ENCODE measurements at regions of chrX and their contacts with region 1.

Region 1: GRCh38 chrX:107514944-107515343 is 65.5 kb downstream of the FRMPD3 start:
- DNase-seq: no peak
- H3K4me3 ChIP-seq: no peak overlapping the region
- H3K27ac ChIP-seq: no peak overlapping the region
- H3K4me1 ChIP-seq: no peaks in the 10 kb centered on the region
- H3K27me3 ChIP-seq: peaks cover 0 to 4% (median 0%) of the 10 kb centered on the region in 4 donors
- CTCF ChIP-seq: no peak
- EP300 ChIP-seq: no peak
- POLR2A ChIP-seq: no peak

Region 2: GRCh38 chrX:107632346-107632745 is 117.4 kb after region 1 on chrX:
- intact Hi-C with region 1: loop called (anchors 5 kb)
- DNase-seq: no peak
- H3K4me3 ChIP-seq: no peak overlapping the region
- H3K27ac ChIP-seq: no peak overlapping the region
- H3K4me1 ChIP-seq: peaks cover 0 to 19% (median 16%) of the 10 kb centered on the region in 4 donors
- H3K27me3 ChIP-seq: no peaks in the 10 kb centered on the region
- CTCF ChIP-seq: no peak
- EP300 ChIP-seq: no peak
- POLR2A ChIP-seq: no peak